Activated CD8-positive, alpha-beta memory T cell treated with anti-CD3 and anti-CD28 coated beads, Interleukin-2, amount 10 ng/mL, durations not matched to agents 7 days and 5 days (primary cell): ENCODE measurements at regions of chr10 and their contacts with region 1.

Region 1: DNA sequence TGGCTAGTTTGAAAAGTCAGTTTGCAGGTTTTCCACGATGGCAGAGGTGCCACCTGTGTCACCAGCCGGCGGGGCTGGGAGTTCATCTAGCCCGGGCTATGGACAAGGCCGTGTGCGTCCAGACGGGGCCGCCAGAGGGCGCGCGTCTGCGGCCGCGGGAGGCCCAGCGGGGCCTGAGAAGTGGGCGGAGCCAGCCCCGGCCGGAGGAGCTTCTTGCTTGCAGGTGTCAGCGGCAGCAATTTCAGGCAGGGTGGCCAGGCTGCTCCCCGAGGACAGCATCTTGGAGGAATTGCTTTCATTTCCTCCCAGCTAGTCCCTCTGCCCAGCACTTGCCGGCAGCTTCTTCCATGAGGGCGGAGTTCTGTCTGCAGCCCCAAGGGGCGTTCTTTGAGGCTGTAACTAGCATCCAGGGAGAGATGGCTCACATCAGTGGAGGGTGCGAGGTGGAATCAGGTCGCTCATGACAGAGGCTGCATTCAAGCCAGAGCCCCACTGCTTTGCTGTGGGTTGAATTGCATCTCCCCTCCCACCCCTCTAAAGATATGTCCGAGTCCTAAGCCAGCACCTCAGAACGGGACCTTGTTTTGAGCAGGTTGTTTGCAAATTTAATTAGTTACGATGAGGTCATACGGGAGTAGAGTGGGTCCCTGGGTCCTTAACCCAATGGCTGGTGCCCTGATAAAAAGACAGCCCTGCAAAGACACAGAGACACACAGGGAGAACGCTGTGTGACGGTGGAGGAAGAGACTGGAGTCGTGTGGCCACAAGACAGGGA is 85.9 kb upstream of the MKI67 start:
- DNase-seq: peak; percentile 87
- ATAC-seq: peak; percentile 79
- H3K4me3 Mint-ChIP-seq: peak overlapping the region; percentile 68
- H3K27ac Mint-ChIP-seq: peak overlapping the region; percentile 64
- H3K4me1 Mint-ChIP-seq: peaks cover 13% of the 10 kb centered on the region
- H3K27me3 Mint-ChIP-seq: peaks cover 14% of the 10 kb centered on the region

Region 2: GRCh38 chr10:127840884-127841283 is 371.3 kb before region 1 on chr10:
- CTCF ChIA-PET with region 1: no interaction called
- DNase-seq: no peak
- ATAC-seq: no peak
- H3K4me3 Mint-ChIP-seq: no peak overlapping the region
- H3K27ac Mint-ChIP-seq: no peak overlapping the region
- H3K4me1 Mint-ChIP-seq: no peaks in the 10 kb centered on the region
- H3K27me3 Mint-ChIP-seq: peaks cover 2% of the 10 kb centered on the region

Region 3: GRCh38 chr10:128178319-128178958 is 33.7 kb before region 1 on chr10:
- CTCF ChIA-PET with region 1: interaction called, 110 read pairs
- DNase-seq: peak; percentile 82
- ATAC-seq: peak; percentile 67
- H3K4me3 Mint-ChIP-seq: no peak overlapping the region
- H3K27ac Mint-ChIP-seq: no peak overlapping the region
- H3K4me1 Mint-ChIP-seq: peaks cover 32% of the 10 kb centered on the region
- H3K27me3 Mint-ChIP-seq: peaks cover 16% of the 10 kb centered on the region

Region 4: DNA sequence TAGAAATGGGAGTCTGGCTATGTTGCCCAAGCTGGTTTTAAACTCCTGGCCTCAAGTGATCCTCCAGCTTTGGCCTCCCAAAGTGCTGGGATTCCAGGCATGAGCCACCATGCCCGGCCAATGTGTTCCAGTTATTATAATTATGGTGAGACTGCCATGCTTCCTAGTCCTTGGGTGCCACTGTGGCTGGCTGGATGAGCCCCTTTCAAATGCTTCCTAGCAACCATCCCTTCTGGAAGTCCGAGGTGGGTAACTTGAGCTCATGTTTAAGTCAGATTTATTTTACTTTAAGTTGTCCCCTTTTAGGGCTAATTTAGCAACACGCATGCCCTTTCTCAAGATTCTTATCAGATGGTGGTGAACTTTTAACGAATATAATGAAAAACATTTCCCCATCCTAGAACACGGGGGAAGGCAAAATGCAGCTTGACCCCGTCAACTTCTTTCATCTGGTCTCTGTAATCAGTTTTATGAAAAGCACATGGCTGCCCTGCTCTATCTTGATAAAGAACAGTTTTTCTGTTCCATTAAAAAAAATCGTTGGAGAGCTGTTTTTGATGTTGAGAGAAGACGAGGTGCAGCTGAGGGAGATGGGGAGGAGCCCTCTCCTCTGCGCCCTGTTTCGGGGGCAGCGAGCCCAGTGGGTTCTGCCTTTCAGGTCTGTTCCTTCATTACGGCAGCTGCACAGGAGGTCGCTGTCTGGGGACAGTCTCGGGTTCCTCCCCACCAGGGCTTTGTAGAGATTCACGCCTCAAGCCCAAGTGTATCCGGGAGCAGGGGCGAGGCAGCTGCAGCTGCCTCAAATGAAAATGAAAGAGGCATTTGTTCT is 25.0 kb before region 1 on chr10:
- CTCF ChIA-PET with region 1: interaction called, 110 read pairs
- DNase-seq: peak; percentile 67
- ATAC-seq: peak; percentile 91
- H3K4me3 Mint-ChIP-seq: peak overlapping the region; percentile 63
- H3K27ac Mint-ChIP-seq: peak overlapping the region; percentile 78
- H3K4me1 Mint-ChIP-seq: peaks cover 27% of the 10 kb centered on the region
- H3K27me3 Mint-ChIP-seq: peaks cover 8% of the 10 kb centered on the region